SK-N-SH (cell line): ENCODE measurements at regions of chr6 and their contacts with region 1.

Region 1: GRCh38 chr6:41334482-41335040 is 847 bp upstream of the NCR2 start:
- DNase-seq: peak; percentile 41
- H3K4me3 ChIP-seq: no peak overlapping the region
- H3K27ac ChIP-seq: no peak overlapping the region
- H3K4me1 ChIP-seq: peaks cover 0 to 7% of the 10 kb centered on the region in 2 experiments; a peak in 2 of 4 replicates
- H3K27me3 ChIP-seq: peaks cover 9% of the 10 kb centered on the region
- CTCF ChIP-seq: no peak
- EP300 ChIP-seq: no peak
- RAD21 ChIP-seq: peak; percentile 24; the same call in 1 of the 2 replicates

Region 2: DNA sequence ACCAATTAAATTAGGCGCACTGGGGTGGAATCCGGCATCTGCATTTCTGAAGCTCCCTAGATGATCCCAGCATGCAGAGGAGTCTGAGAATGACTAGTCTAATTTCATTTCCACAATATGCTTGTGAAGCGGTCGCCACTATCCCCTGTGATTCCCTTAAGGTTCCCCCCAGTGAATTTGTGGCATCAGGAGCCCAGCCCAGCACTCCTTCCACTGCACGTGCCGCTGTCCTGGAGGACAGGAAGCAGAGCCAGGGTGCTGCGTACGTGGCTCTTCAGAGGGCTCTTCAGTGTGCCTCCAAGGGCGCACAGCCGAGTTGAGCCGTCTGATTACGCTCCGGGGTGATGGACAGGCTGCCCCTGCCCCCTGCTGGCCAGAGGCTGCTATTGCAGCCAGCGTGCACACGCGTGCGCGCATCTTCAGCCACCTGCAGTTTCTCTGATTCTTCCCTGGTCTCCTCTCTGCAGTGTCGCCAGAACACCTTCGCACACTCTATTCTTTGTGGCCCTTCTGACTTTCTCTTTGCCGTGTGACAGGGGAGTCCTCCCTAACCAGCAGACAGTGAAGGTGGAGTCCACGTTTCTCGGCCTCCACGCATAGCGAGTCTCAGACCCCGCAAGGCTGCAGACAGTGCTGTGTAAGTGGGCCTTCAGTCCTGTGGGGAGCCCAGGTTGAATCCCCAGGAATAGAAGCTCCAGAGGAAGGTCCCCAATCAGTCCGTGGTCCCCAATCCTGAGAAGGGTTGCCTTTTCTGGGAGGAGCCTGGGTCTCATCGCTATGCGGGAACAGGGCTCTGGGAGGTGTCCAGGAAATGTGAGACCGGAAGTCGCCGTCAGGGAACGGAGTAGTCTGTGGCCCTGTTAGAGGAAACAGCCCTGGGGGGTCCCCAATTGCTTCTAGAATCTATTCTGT is 15.7 kb before region 1 on chr6:
- CTCF ChIA-PET with region 1: interaction called, 80 read pairs
- POLR2A ChIA-PET with region 1: no interaction called
- DNase-seq: peak; percentile 84
- H3K4me3 ChIP-seq: peak overlapping the region; percentile 28 to 60
- H3K27ac ChIP-seq: no peak overlapping the region
- H3K4me1 ChIP-seq: peaks cover 0 to 2% of the 10 kb centered on the region in 2 experiments; a peak in 1 of 4 replicates
- H3K27me3 ChIP-seq: peaks cover 20% of the 10 kb centered on the region
- CTCF ChIP-seq: peak; percentile 97
- EP300 ChIP-seq: no peak
- RAD21 ChIP-seq: peak; percentile 88

Region 3: GRCh38 chr6:41379306-41379705 is 44.7 kb after region 1 on chr6:
- CTCF ChIA-PET with region 1: no interaction called
- POLR2A ChIA-PET with region 1: no interaction called
- DNase-seq: no peak
- H3K4me3 ChIP-seq: no peak overlapping the region
- H3K27ac ChIP-seq: no peak overlapping the region
- H3K4me1 ChIP-seq: 0 out of 4 replicates have a peak, but pooled peaks cover 0 to 3% of the 10 kb centered on the region in 2 experiments
- H3K27me3 ChIP-seq: peaks cover 72% of the 10 kb centered on the region
- CTCF ChIP-seq: no peak
- EP300 ChIP-seq: no peak
- RAD21 ChIP-seq: no peak